H1 (cell line): ENCODE measurements at regions of chr11 and their contacts with region 1.

Region 1: GRCh38 chr11:65888163-65888814 is at the start of gene FIBP:
- DNase-seq: peak; percentile 87 to 98
- H3K4me3 ChIP-seq: peak within 1 kb of the TSS; percentile 73 to 84 (median 79)
- H3K27ac ChIP-seq: peak within 1 kb of the TSS; percentile 75
- H3K4me1 ChIP-seq: peaks cover 0 to 27% (median 12%) of the 10 kb centered on the region in 4 experiments; a peak in 5 of 7 replicates
- H3K27me3 ChIP-seq: peaks cover 0 to 14% (median 8%) of the 10 kb centered on the region in 4 experiments; a peak in 6 of 7 replicates
- CTCF ChIP-seq: peak in 2 of 3 experiments; percentile 80 to 84; a peak in 3 of 4 replicates
- EP300 ChIP-seq: no peak; a peak in 1 of 3 replicates
- POLR2A ChIP-seq: peak in 1 of 2 experiments; percentile 93; a peak in 2 of 3 replicates
- RAD21 ChIP-seq: peak; percentile 42 to 64
- total RNA-seq, gene FIBP: 74.3 and 79.9 TPM in 2 replicates

Region 2: GRCh38 chr11:65785319-65786000 is 102.8 kb before region 1 on chr11:
- CTCF ChIA-PET with region 1: interaction called, 38 read pairs
- POLR2A ChIA-PET with region 1: interaction called, 3 read pairs
- DNase-seq: no peak
- H3K4me3 ChIP-seq: peak overlapping the region in 1 of 4 experiments; percentile 61; a peak in 1 of 8 replicates
- H3K27ac ChIP-seq: no peak overlapping the region
- H3K4me1 ChIP-seq: peaks cover 14 to 41% (median 26%) of the 10 kb centered on the region in 4 experiments
- H3K27me3 ChIP-seq: peaks cover 20 to 61% (median 53%) of the 10 kb centered on the region in 4 experiments
- CTCF ChIP-seq: no peak
- EP300 ChIP-seq: no peak
- POLR2A ChIP-seq: no peak
- RAD21 ChIP-seq: no peak

Region 3: GRCh38 chr11:65850831-65851811 is 37.2 kb before region 1 on chr11:
- CTCF ChIA-PET with region 1: interaction called, 283 read pairs
- POLR2A ChIA-PET with region 1: interaction called, 1,071 read pairs
- DNase-seq: peak in 1 of 2 experiments; percentile 93
- H3K4me3 ChIP-seq: no peak overlapping the region
- H3K27ac ChIP-seq: no peak overlapping the region
- H3K4me1 ChIP-seq: peaks cover 0 to 5% (median under 1%) of the 10 kb centered on the region in 4 experiments; a peak in 5 of 7 replicates
- H3K27me3 ChIP-seq: no peaks in the 10 kb centered on the region; a peak in 1 of 7 replicates
- CTCF ChIP-seq: peak in 2 of 3 experiments; percentile 69 to 88; a peak in 3 of 4 replicates
- EP300 ChIP-seq: no peak
- POLR2A ChIP-seq: peak in 1 of 2 experiments; percentile 27; a peak in 2 of 3 replicates
- RAD21 ChIP-seq: peak; percentile 32 to 48; a peak in 3 of 4 replicates

Region 4: GRCh38 chr11:65900125-65900898 is 12.0 kb after region 1 on chr11 and contains the start of gene FOSL1:
- CTCF ChIA-PET with region 1: interaction called, 212 read pairs
- POLR2A ChIA-PET with region 1: interaction called, 18 read pairs
- DNase-seq: peak; percentile 91 to 93
- H3K4me3 ChIP-seq: peak within 1 kb of the TSS; percentile 39 to 71 (median 52)
- H3K27ac ChIP-seq: no peak within 1 kb of the TSS
- H3K4me1 ChIP-seq: peaks cover 3 to 11% (median 8%) of the 10 kb centered on the region in 4 experiments; a peak in 6 of 7 replicates
- H3K27me3 ChIP-seq: peaks cover 15 to 41% (median 36%) of the 10 kb centered on the region in 4 experiments
- CTCF ChIP-seq: no peak
- EP300 ChIP-seq: peak in 1 of 2 experiments; percentile 76; a peak in 1 of 3 replicates
- POLR2A ChIP-seq: peak in 1 of 2 experiments; percentile 61; a peak in 2 of 3 replicates
- RAD21 ChIP-seq: no peak
- total RNA-seq, gene FOSL1: 6.3 and 7.5 TPM in 2 replicates

Region 5: GRCh38 chr11:65927904-65928397 is 39.7 kb after region 1 on chr11:
- CTCF ChIA-PET with region 1: interaction called, 17 read pairs
- POLR2A ChIA-PET with region 1: interaction called, 5 read pairs
- DNase-seq: no peak
- H3K4me3 ChIP-seq: no peak overlapping the region
- H3K27ac ChIP-seq: peak overlapping the region; percentile 41; the same call in 1 of the 2 replicates
- H3K4me1 ChIP-seq: peaks cover 0 to 8% (median 5%) of the 10 kb centered on the region in 4 experiments; a peak in 5 of 7 replicates
- H3K27me3 ChIP-seq: no peaks in the 10 kb centered on the region
- CTCF ChIP-seq: no peak
- EP300 ChIP-seq: no peak
- POLR2A ChIP-seq: no peak
- RAD21 ChIP-seq: no peak

Region 6: GRCh38 chr11:65976216-65977176 is 88.2 kb after region 1 on chr11:
- CTCF ChIA-PET with region 1: interaction called, 281 read pairs
- POLR2A ChIA-PET with region 1: interaction called, 11 read pairs
- DNase-seq: no peak
- H3K4me3 ChIP-seq: no peak overlapping the region
- H3K27ac ChIP-seq: no peak overlapping the region
- H3K4me1 ChIP-seq: no peaks in the 10 kb centered on the region
- H3K27me3 ChIP-seq: no peaks in the 10 kb centered on the region
- CTCF ChIP-seq: no peak
- EP300 ChIP-seq: no peak
- POLR2A ChIP-seq: no peak
- RAD21 ChIP-seq: no peak

Region 7: GRCh38 chr11:66045177-66045639 is 156.9 kb after region 1 on chr11:
- CTCF ChIA-PET with region 1: interaction called, 17 read pairs
- POLR2A ChIA-PET with region 1: interaction called, 3 read pairs
- DNase-seq: peak; percentile 67 to 95
- H3K4me3 ChIP-seq: no peak overlapping the region
- H3K27ac ChIP-seq: no peak overlapping the region
- H3K4me1 ChIP-seq: peaks cover 0 to 21% (median 14%) of the 10 kb centered on the region in 4 experiments; a peak in 6 of 7 replicates
- H3K27me3 ChIP-seq: no peaks in the 10 kb centered on the region
- CTCF ChIP-seq: peak; percentile 95 to 97 (median 96)
- EP300 ChIP-seq: no peak
- POLR2A ChIP-seq: no peak
- RAD21 ChIP-seq: peak; percentile 44 to 63

Region 8: GRCh38 chr11:66119348-66120133 is 231.3 kb after region 1 on chr11:
- CTCF ChIA-PET with region 1: no interaction called
- POLR2A ChIA-PET with region 1: no interaction called
- DNase-seq: no peak
- H3K4me3 ChIP-seq: no peak overlapping the region
- H3K27ac ChIP-seq: no peak overlapping the region
- H3K4me1 ChIP-seq: peaks cover 0 to 10% (median 5%) of the 10 kb centered on the region in 4 experiments; a peak in 5 of 7 replicates
- H3K27me3 ChIP-seq: no peaks in the 10 kb centered on the region; a peak in 1 of 7 replicates
- CTCF ChIP-seq: no peak
- EP300 ChIP-seq: no peak
- POLR2A ChIP-seq: no peak
- RAD21 ChIP-seq: no peak